Activated CD4-positive, alpha-beta memory T cell treated with anti-CD3 and anti-CD28 coated beads for 36 hours (primary cell): ENCODE measurements at regions of chr13 and their contacts with region 1.

Region 1: GRCh38 chr13:106567474-106568298 is at the start of gene ARGLU1:
- DNase-seq: peak; percentile 97
- H3K4me3 Mint-ChIP-seq: peak within 1 kb of the TSS; percentile 98
- H3K27ac Mint-ChIP-seq: peak within 1 kb of the TSS; percentile 97
- H3K4me1 Mint-ChIP-seq: peaks cover 48% of the 10 kb centered on the region
- H3K27me3 Mint-ChIP-seq: no peaks in the 10 kb centered on the region
- total RNA-seq, gene ARGLU1: 81.0 to 87.1 TPM

Region 2: DNA sequence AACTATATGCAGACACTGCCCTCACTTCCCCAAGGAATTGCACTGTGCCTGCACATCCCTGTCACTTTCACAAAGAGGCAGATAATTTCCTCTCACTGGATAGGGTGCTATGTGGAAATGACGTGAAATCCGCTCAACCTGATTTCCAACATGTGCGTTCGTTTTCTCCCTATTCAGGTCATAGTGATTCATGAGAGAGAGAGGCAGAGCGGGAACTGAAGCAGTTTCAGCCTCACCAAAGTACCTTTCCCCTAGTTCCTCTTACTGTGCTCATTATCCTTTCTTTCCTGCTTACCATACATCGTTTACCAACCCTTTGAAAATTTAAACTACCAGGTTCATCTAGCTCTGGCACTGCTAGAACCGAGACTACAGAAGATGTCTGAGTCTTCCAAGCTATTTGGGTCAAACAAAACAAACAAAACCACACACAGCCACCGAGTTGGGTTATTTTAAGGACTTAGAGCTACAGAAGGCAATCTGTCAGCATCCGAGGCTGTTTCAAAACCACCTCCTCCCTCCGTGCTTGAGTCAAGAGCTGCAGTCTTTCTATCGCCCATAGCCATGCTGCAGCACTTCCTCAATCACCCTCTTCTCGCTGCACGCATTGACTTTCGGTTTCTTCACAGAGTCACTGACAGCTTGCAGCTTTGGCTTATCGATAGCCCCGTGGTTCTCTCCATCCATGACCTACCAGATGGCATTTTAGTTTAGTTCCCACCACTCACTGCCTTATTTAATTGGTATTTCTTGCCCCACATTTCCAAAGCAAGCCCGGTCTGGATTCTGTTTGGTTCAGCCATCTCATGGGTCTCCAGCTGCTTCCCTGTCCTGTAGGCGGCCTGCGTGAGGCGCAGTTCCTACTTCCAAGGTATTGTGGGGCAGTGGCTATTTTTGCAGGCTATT is 1428.1 kb before region 1 on chr13:
- CTCF ChIA-PET with region 1: no interaction called
- POLR2A ChIA-PET with region 1: no interaction called
- intact Hi-C with region 1: loop called (anchors 5 kb)
- DNase-seq: peak; percentile 72
- H3K4me3 Mint-ChIP-seq: peak overlapping the region; percentile 89
- H3K27ac Mint-ChIP-seq: peak overlapping the region; percentile 95
- H3K4me1 Mint-ChIP-seq: peaks cover 18% of the 10 kb centered on the region
- H3K27me3 Mint-ChIP-seq: no peaks in the 10 kb centered on the region

Region 3: DNA sequence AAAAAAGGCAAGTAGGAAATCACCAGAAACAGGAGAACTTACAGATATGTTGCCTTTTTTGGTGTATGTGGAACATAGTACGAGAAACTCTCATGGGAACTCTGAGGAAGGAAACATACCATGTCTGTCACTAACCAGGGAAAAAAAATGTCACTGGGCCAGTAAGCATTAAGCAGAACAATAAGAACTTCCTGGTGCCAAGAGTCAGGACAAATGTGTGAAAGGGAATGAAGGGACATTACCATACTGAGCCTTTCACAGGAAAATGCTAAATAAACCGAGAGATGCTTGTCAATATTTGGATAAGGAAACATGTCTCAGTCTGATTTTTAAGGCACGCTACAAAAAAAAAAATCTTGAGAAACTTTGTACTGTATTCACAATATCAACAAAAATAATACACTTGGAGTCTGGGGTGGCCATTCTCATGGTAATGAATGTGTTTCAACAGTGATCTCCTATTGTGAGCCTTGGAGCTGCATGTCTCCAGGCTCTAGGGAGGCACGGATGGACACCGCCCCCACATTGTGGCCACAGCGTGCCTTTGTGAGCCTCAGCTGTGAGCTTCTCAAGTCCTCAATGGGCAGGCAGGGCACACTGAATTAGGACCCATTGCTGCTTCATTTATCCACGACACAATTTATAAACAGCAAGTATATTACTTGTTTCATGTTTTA is 113.2 kb after region 1 on chr13:
- CTCF ChIA-PET with region 1: no interaction called
- POLR2A ChIA-PET with region 1: no interaction called
- intact Hi-C with region 1: no loop called
- DNase-seq: no peak
- H3K4me3 Mint-ChIP-seq: no peak overlapping the region
- H3K27ac Mint-ChIP-seq: no peak overlapping the region
- H3K4me1 Mint-ChIP-seq: no peaks in the 10 kb centered on the region
- H3K27me3 Mint-ChIP-seq: peaks cover 4% of the 10 kb centered on the region

Region 4: GRCh38 chr13:106802976-106803375 is 235.3 kb after region 1 on chr13:
- CTCF ChIA-PET with region 1: no interaction called
- POLR2A ChIA-PET with region 1: no interaction called
- intact Hi-C with region 1: no loop called
- DNase-seq: no peak
- H3K4me3 Mint-ChIP-seq: no peak overlapping the region
- H3K27ac Mint-ChIP-seq: no peak overlapping the region
- H3K4me1 Mint-ChIP-seq: no peaks in the 10 kb centered on the region
- H3K27me3 Mint-ChIP-seq: no peaks in the 10 kb centered on the region

Region 5: DNA sequence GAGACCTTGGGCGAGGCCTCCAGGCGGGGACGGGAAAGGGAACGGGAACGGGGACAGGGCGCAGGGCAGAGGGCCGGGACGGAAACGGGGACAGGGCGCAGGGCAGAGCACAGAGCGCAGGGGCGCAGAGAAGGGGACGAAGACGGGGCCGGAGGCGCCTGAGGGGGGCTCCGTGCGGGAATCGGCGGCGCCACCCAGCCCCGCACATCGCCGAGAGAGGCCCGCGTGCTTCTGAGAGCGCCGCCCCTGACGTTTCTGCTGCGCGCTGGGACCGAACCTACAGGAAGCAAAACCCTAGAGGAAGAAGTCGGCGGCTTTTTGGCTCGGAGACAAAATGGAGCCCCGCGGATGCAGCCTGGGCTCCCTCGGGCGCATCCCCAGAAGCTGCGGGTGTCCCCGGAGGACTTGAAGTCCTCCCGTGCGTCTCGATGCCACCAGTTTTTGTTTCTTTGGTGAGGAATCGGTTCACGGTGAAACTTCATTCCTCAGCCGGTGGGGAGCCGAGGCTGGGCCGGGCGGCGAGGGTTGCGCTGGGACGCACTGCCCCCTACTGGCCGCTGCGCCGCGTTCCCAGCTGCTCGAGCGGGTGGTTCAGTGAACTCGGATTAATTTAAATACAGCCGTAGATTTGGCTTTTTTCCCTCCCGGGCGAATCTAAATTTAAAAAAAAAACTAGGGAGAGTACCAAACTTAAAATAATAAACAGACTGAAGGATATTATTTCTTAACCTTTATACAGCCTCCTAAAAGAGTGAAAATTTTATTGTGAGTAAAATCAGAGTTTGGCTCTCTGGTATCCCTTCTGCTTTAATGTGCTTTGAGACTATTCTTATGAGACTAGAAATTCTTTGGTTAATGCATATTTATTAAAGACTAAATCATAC is 350.2 kb after region 1 on chr13:
- CTCF ChIA-PET with region 1: no interaction called
- POLR2A ChIA-PET with region 1: no interaction called
- intact Hi-C with region 1: loop called (anchors 2 kb)
- DNase-seq: peak; percentile 82
- H3K4me3 Mint-ChIP-seq: peak overlapping the region; percentile 75
- H3K27ac Mint-ChIP-seq: no peak overlapping the region
- H3K4me1 Mint-ChIP-seq: peaks cover 8% of the 10 kb centered on the region
- H3K27me3 Mint-ChIP-seq: peaks cover 24% of the 10 kb centered on the region